ENCODE measurements at regions of chr12 and their contacts with region 1.

Region 1: DNA sequence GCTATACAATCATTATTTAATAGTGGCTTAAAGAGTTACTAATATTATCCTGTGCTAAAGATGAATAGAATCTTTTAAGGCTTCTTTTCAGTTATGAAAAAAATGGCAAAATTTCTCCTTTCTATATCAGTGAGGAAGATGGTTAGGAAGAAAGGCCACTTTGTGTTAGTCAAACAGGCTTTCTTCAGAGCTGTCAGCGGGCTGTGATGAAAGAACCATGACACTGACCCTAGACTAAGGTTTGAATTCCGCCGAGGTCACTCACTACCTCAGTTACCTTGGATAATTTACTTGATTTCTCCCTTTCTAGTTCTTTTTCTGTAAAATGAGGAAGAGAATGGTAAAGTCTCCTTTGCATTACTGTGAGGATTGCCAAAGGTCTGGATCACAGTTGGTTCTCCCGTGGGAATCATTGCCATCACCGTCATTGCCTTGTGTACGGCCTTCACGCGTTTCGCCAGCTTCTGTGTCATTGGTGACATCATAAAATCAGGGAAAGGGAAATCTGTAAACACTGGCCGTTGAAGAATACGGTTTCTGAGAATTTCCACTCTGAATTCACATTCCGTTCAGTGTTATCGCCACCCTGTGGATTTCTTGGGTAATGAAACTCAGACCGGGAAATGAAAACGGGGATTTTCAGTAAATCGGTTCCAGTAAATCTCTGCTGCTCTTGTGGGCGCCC is 26.7 kb upstream of the YBX3 start:
- DNase-seq: peak; percentile 85
- ATAC-seq: peak; percentile 96
- H3K4me3 Mint-ChIP-seq: peak overlapping the region; percentile 70
- H3K27ac Mint-ChIP-seq: no peak overlapping the region
- H3K4me1 Mint-ChIP-seq: peaks cover 14% of the 10 kb centered on the region
- H3K27me3 Mint-ChIP-seq: peaks cover 34% of the 10 kb centered on the region

Region 2: GRCh38 chr12:10235761-10236631 is 513.8 kb before region 1 on chr12:
- CTCF ChIA-PET with region 1: interaction called, 20 read pairs
- POLR2A ChIA-PET with region 1: no interaction called
- DNase-seq: peak; percentile 53
- ATAC-seq: peak; percentile 58
- H3K4me3 Mint-ChIP-seq: no peak overlapping the region
- H3K27ac Mint-ChIP-seq: peak overlapping the region; percentile 40
- H3K4me1 Mint-ChIP-seq: peaks cover 32% of the 10 kb centered on the region
- H3K27me3 Mint-ChIP-seq: no peaks in the 10 kb centered on the region

Region 3: GRCh38 chr12:10677651-10678050 is 72.2 kb before region 1 on chr12:
- CTCF ChIA-PET with region 1: interaction called, 11 read pairs
- POLR2A ChIA-PET with region 1: no interaction called
- DNase-seq: peak; percentile 32
- ATAC-seq: no peak
- H3K4me3 Mint-ChIP-seq: no peak overlapping the region
- H3K27ac Mint-ChIP-seq: no peak overlapping the region
- H3K4me1 Mint-ChIP-seq: peaks cover 46% of the 10 kb centered on the region
- H3K27me3 Mint-ChIP-seq: peaks cover 26% of the 10 kb centered on the region

Region 4: DNA sequence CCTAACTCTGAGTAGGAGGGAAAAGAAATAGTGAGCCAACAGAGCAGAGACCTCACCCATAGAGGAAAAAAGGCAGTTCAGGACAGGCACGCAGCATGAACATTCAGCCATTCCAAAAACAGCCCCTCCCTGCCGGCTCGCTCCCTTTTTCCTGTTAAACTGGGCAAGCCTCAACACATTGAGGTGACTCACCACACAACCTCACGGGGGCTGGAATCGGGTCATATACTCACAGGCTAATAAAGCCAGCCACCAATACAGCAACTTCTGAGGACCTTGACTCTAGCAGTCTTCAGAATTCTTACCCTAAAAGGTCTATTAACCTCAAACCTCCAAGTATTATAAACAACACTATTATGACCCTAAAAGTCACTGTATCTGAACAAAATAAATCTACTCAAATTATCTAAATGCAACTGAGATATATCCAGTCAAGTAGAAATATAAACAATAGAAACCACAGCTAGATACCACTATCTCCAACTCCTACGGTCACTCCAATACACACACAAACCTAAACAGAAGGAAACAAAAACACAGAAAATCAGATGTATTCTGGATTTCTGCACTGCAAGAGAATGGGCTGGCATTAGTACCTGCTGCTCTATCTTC is 33.0 kb before region 1 on chr12:
- CTCF ChIA-PET with region 1: interaction called, 22 read pairs
- POLR2A ChIA-PET with region 1: no interaction called
- DNase-seq: no peak
- ATAC-seq: no peak
- H3K4me3 Mint-ChIP-seq: no peak overlapping the region
- H3K27ac Mint-ChIP-seq: no peak overlapping the region
- H3K4me1 Mint-ChIP-seq: peaks cover 49% of the 10 kb centered on the region
- H3K27me3 Mint-ChIP-seq: no peaks in the 10 kb centered on the region

Region 5: GRCh38 chr12:10726940-10727339 is 22.9 kb before region 1 on chr12:
- CTCF ChIA-PET with region 1: interaction called, 13 read pairs
- POLR2A ChIA-PET with region 1: no interaction called
- DNase-seq: no peak
- ATAC-seq: no peak
- H3K4me3 Mint-ChIP-seq: no peak overlapping the region
- H3K27ac Mint-ChIP-seq: no peak overlapping the region
- H3K4me1 Mint-ChIP-seq: peaks cover 13% of the 10 kb centered on the region
- H3K27me3 Mint-ChIP-seq: peaks cover 51% of the 10 kb centered on the region

Measured in activated CD8-positive, alpha-beta T cell treated with anti-CD3 and anti-CD28 coated beads, Interleukin-2, amount 10 ng/mL, durations not matched to agents 7 days and 5 days (primary cell).